Mucosa of descending colon (tissue), 3 donors: ENCODE measurements at regions of chr22 and their contacts with region 1.

Region 1: GRCh38 chr22:39003165-39003638 is 10.9 kb upstream of the APOBEC3C start:
- DNase-seq: peak; percentile 72 to 84 (median 73)
- ATAC-seq: peak; percentile 96
- H3K4me3 ChIP-seq: no peak overlapping the region
- H3K4me1 ChIP-seq: peaks cover 4% of the 10 kb centered on the region
- CTCF ChIP-seq: peak; percentile 62

Region 2: DNA sequence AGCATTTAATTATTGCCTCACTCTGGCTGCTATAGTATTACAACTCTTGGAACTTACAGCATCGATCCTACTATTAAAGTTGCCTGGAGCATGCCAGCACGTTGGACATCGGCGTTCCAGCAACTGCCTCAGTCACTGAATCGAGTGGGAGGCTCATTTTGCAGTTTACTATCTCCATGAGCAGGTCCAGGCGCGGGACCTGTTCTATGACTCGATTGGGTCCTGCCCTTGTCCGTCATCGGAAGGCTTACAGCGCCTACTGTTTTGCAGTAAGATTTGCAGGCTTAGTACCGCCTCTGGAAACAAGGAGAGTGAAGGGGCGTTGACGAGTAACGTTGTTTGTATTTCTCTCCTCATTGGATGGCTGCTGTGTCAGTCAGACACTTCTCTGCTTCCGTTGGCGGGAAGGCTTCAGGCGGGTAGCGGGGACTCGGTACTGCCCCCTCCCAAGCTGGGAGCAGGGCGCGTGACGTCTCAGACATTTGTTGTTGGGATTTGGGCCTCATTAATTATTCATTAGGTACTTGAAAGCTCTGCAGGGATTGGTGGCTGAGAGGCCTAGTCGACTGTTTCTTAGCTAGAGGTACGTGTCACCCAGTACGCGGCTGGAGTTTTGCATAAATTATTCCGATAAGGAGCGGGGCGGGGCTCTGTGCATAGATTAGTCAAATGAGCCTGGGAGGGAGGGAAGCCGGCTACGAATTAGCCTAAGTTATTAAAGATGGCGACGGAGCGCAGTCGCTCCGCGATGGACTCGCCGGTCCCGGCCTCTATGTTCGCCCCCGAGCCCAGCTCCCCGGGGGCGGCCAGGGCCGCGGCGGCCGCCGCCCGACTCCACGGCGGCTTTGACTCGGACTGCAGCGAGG is 297.7 kb before region 1 on chr22 and contains the start of gene GTPBP1:
- intact Hi-C with region 1: no loop called
- DNase-seq: peak; percentile 94 to 100 (median 98)
- ATAC-seq: peak; percentile 82
- H3K4me3 ChIP-seq: peak within 1 kb of the TSS; percentile 100
- H3K4me1 ChIP-seq: peaks cover 34% of the 10 kb centered on the region
- CTCF ChIP-seq: peak; percentile 12
- total RNA-seq, gene GTPBP1: 73.1 to 96.8 (median 76.8) TPM

Region 3: GRCh38 chr22:38872172-38872830 is 130.9 kb before region 1 on chr22 and contains the start of gene CBX6:
- intact Hi-C with region 1: loop called (anchors 10 kb)
- DNase-seq: peak; percentile 94
- ATAC-seq: peak; percentile 83
- H3K4me3 ChIP-seq: peak within 1 kb of the TSS; percentile 40
- H3K4me1 ChIP-seq: peaks cover 14% of the 10 kb centered on the region
- CTCF ChIP-seq: no peak
- total RNA-seq, gene CBX6: 15.7 to 84.0 (median 23.6) TPM

Region 4: DNA sequence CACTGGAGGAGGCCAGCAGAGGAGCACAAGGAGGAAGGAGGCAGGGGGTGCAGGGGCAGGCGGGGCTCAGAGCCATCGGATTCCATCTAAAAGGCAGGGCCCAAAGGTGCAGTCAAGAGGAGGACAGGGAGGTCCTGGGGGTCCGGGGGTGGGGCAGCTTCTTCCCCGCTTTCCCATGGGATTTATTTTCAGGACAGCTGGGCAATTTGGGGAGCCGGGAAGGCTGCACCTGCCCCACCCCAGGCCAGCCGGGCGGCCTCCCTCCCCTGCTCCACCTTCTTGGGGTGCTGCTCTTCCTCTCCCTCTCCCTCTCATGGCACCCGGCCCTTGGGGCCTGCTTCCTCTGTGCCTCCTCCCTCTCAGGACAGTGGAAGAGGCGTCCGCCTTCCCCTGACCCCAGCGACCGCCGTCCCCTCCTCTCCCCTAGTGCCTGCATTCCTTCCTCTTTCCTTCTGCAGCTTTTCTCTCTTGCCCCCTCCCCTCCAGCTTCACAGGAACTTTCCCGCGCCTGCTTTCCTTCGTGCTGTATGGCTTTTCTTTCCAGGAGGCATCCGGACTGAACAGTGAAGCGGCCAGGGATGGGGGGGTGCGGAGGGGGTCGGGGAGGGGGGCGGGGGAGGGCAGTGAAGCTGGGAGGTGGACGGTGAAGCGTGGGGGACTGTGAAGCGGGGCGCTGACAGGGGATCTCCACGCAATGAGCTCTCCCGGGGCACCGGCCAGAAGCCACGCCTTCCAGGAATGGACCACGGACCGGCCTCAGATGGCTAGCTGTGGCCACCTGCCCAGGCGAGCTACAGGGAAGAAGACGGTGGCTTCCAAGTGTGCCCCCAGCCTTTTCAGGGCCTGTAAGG is 120.8 kb after region 1 on chr22:
- intact Hi-C with region 1: loop called in 1 of 2 experiments (anchors 5 kb)
- DNase-seq: no peak
- ATAC-seq: no peak
- H3K4me3 ChIP-seq: no peak overlapping the region
- H3K4me1 ChIP-seq: peaks cover 8% of the 10 kb centered on the region
- CTCF ChIP-seq: no peak